ENCODE measurements at regions of chr15 and their contacts with region 1.

Region 1: GRCh38 chr15:44102675-44103254 is 92.3 kb downstream of the FRMD5 start:
- DNase-seq: peak in 1 of 2 donors; percentile 15
- ATAC-seq: peak in 7 of 8 donors; percentile 35 to 84 (median 61)
- H3K4me3 ChIP-seq: no peak overlapping the region
- H3K27ac ChIP-seq: no peak overlapping the region
- H3K4me1 ChIP-seq: peaks cover 0 to 20% (median 10%) of the 10 kb centered on the region in 9 donors
- H3K27me3 ChIP-seq: no peaks in the 10 kb centered on the region
- CTCF ChIP-seq: no peak

Region 2: GRCh38 chr15:44804298-44805046 is 701.7 kb after region 1 on chr15:
- intact Hi-C with region 1: loop called in 1 of 10 experiments (anchors 5 kb)
- DNase-seq: no peak
- ATAC-seq: peak in 1 of 8 donors; percentile 15
- H3K4me3 ChIP-seq: no peak overlapping the region
- H3K27ac ChIP-seq: no peak overlapping the region
- H3K4me1 ChIP-seq: peaks cover 0 to 11% (median 0%) of the 10 kb centered on the region in 9 donors
- H3K27me3 ChIP-seq: peaks cover 0 to 3% (median 0%) of the 10 kb centered on the region in 7 donors
- CTCF ChIP-seq: no peak

Measured in heart right ventricle (tissue), 16 donors.